Activated T-helper 1 cell treated with anti-CD3 and anti-CD28 coated beads, Interleukin-12 subunit alpha, Interleukin-12 subunit beta, Interleukin-2, Interleukin-4 antibody, amounts not matched to agents 30 ng/mL and 10 ng/mL and 1 ng/mL, durations not matched to agents 14 hours and 24 hours and 36 hours (primary cell): ENCODE measurements at regions of chr19 and their contacts with region 1.

Region 1: GRCh38 chr19:58408152-58409009 is at the start of gene ZNF584:
- DNase-seq: peak; percentile 90
- H3K4me3 Mint-ChIP-seq: peak within 1 kb of the TSS; percentile 84
- H3K27ac Mint-ChIP-seq: peak within 1 kb of the TSS; percentile 98
- H3K4me1 Mint-ChIP-seq: peaks cover 35% of the 10 kb centered on the region
- H3K27me3 Mint-ChIP-seq: no peaks in the 10 kb centered on the region
- total RNA-seq, gene ZNF584: 17.8 and 20.6 TPM in 2 replicates

Region 2: DNA sequence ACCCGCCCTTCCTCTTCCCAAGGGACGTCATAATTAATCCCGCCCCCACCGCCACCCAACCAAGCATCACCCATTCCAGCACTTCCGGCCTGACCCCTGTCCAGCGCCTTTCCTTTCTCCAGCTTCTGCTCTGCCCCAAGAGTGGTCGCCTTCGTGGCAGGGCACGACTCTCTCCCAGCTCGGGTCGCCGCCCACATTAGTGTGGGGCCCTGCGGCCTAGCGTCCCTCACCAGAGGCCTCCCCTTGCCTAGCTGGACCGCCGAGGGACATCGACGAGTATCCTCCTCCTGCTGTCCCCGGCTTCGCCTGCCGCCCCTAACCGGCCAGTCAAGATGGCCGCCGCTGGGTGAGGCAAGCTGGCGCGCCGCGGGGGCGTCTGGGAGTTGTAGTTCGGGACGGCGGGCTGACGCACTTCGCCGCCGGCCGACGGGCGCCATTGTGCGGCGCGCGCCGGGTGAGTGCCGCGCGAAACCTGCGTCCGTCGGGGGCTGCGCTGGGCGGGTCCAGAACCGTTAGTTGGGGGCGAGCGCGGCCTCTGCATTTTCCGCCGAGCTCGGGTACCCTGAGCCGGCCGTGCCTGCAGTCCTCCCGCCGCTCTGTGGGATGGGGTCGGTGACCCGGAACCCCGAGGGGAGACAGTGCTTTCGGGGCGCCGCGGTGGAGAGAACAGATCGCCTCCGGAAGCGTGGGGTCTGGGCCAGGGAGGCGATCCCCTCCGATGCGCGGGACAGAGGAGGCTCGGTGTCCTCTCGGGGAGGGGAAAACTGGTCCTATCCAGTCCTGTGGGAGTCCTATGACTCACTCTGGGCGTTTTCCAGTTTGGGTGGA is 225.2 kb before region 1 on chr19 and contains the start of gene ZNF274:
- intact Hi-C with region 1: loop called (anchors 1 kb)
- DNase-seq: peak; percentile 90
- H3K4me3 Mint-ChIP-seq: peak within 1 kb of the TSS; percentile 93
- H3K27ac Mint-ChIP-seq: peak within 1 kb of the TSS; percentile 99
- H3K4me1 Mint-ChIP-seq: peaks cover 16% of the 10 kb centered on the region
- H3K27me3 Mint-ChIP-seq: no peaks in the 10 kb centered on the region
- total RNA-seq, gene ZNF274: 18.2 and 21.2 TPM in 2 replicates

Region 3: DNA sequence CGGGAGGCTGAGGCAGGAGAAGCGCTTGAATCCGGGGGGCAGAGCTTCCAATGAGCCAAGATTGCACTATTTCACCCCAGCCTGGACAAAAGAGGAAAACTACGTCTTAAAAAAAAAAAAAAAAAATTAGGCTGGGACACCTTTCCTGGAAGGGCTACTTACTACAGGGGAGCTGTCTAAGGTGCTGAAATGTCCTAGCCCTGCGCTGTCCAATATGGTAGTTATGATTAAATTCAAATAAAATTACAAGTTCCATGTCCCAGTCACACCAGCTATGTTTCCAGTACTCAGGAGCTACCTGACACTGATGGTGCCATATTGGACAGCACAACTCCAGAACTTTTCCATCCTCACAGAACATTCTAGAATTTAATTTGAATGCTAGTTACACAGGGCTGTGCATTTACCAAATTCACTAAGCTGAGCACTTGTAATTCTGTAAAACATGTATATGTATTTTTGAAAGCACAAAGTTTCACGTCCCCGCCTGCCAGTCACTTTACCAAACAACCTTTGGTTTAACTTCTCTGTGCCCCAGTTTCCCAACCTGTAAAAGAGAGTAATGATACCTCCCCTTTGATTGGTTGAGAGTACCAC is 90.8 kb before region 1 on chr19:
- intact Hi-C with region 1: no loop called
- DNase-seq: no peak
- H3K4me3 Mint-ChIP-seq: no peak overlapping the region
- H3K27ac Mint-ChIP-seq: no peak overlapping the region
- H3K4me1 Mint-ChIP-seq: no peaks in the 10 kb centered on the region
- H3K27me3 Mint-ChIP-seq: no peaks in the 10 kb centered on the region

Region 4: DNA sequence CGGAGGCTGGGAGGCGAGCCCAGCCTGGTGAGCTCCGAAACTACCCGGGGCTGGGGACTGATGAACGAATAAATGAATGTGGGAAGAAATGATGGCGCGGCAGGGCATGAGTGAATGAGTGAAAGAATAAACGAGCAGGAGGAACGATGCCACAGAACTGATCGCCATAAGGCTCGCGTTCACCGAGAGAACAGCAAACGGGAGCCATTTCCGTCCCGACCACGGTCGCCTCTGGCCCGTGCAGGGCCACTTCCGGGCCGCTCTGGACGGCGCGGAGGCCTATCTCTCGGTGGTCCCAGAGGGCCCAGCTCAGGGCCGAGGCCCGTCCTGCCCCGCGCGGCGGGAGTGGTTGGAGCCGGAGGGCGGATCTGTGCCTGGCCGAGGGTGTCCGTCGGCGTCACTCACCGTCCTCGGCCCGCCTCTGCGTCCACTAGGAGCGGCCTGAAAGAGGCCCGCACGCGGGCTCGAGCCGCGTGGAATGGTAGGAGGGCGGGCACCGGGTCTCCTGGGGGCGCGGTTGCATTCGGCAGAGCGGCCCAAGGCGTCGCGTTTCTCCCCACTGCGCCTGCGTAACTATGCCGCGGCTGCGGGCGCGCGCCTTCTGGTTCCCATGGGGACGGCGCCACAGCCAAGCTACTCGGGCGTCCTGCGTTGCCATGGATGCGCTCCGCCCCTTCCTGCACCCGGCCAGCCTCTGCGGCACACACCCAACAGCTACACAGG is 45.9 kb before region 1 on chr19 and contains the start of gene ZNF497:
- intact Hi-C with region 1: loop called (anchors 2 kb)
- DNase-seq: peak; percentile 95
- H3K4me3 Mint-ChIP-seq: peak within 1 kb of the TSS; percentile 94
- H3K27ac Mint-ChIP-seq: peak within 1 kb of the TSS; percentile 95
- H3K4me1 Mint-ChIP-seq: peaks cover 7% of the 10 kb centered on the region
- H3K27me3 Mint-ChIP-seq: no peaks in the 10 kb centered on the region
- total RNA-seq, gene ZNF497: 0.76 and 0.93 TPM in 2 replicates

Region 5: GRCh38 chr19:58466760-58467589 is 58.6 kb after region 1 on chr19 and contains the start of gene ZNF324:
- intact Hi-C with region 1: loop called (anchors 1 kb)
- DNase-seq: peak; percentile 96
- H3K4me3 Mint-ChIP-seq: peak within 1 kb of the TSS; percentile 88
- H3K27ac Mint-ChIP-seq: peak within 1 kb of the TSS; percentile 71
- H3K4me1 Mint-ChIP-seq: peaks cover 17% of the 10 kb centered on the region
- H3K27me3 Mint-ChIP-seq: no peaks in the 10 kb centered on the region
- total RNA-seq, gene ZNF324: 12.8 and 15.5 TPM in 2 replicates

Region 6: DNA sequence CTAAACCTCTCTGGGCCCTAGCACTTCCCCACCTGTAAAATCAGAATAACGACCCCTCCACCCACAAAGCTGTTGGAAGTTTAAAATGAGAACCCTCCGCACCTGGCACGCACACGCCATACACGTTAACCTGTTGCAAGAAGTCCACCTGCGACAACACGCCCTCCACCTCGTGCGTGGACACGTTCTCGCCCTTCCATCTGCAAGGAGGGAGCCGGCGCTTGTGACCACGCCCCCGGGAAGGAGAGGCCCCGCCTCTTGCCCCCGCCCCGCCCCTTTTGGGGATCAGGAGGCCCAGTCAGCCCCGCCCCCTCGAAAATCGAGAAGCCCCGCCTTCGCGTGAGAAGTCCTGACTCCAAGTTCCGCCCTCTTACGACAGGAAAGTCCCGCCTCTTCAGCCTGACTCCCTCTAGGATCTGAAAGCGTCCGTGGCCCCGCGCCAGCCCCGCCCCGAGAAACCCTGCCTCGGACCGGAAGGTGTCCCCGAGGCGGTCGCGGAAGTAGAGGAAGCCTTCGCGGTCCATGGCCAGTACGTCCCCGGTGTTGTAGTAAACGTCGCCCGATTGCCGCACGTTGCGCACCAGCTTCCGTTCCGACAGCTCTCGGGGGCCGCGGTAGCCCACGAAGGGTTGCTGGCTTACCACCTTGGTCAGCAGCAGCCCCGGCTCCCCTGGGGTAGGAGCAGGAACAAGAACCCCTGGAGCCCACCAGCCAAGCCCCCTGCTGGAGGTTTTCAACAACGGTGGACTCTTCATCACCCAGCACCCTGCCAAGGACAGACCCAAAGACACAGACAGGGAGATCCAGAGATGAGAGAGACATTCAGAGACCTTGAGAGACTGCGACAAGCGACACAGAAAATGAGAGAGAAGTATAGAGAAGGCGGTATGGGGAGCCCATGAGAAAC is 90.9 kb after region 1 on chr19:
- intact Hi-C with region 1: loop called (anchors 1 kb)
- DNase-seq: peak; percentile 96
- H3K4me3 Mint-ChIP-seq: peak overlapping the region; percentile 91
- H3K27ac Mint-ChIP-seq: peak overlapping the region; percentile 91
- H3K4me1 Mint-ChIP-seq: peaks cover 21% of the 10 kb centered on the region
- H3K27me3 Mint-ChIP-seq: peaks cover 7% of the 10 kb centered on the region